Aorta (tissue), 5 donors: ENCODE measurements at regions of chr17 and their contacts with region 1.

Region 1: DNA sequence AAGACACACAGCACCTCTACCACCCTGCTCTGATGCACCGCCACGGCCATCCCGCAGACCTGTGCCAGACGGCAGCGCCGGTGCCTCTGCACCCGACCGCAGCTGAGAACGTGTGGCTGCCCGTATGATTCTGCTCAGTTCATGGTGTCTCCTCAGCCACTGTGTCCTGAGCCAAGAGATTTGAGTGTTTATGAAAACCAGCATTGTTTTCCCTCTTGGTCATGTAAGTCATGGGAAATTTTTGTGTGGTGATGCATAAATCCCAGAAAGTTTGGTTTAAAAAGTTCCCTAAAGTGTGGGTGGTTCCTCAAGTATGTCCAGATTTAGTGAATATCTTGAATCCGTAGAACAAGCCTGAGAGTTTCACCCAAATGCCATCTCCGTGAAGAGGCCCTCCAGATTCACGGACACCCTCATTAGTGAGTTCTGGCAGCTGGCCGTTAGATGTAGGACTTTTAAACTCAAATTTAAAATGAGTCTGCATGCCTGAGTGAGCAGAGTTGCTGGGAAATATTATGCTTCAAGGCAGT is 57.6 kb downstream of the CDRT4 start:
- DNase-seq: peak in 1 of 2 donors; percentile 72
- ATAC-seq: peak; percentile 82
- H3K4me3 ChIP-seq: peak overlapping the region in 1 of 2 donors; percentile 12
- H3K27ac ChIP-seq: peak overlapping the region; percentile 16 to 71
- H3K4me1 ChIP-seq: peaks cover 0 to 3% of the 10 kb centered on the region in 2 donors
- H3K27me3 ChIP-seq: no peaks in the 10 kb centered on the region

Region 2: DNA sequence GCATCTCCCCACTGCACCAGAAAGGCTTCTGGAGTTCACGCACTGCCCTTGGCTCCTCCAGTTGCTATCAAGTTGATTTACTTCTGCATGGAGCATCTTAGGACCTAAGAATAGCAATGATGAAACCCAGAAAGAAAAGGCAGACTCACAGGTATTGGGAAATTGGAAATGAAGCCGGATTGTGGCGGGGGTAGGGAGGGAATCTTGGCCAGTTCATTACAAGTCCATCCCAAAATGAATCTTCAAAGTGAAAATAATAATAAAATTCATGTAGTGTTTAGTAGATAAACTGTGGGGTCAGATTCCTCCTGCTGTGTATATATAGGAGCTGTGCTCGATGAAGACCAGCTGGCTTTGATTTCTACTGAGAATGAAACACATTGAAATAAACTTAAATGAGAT is 102.1 kb before region 1 on chr17:
- intact Hi-C with region 1: no loop called
- DNase-seq: no peak
- ATAC-seq: no peak
- H3K4me3 ChIP-seq: no peak overlapping the region
- H3K27ac ChIP-seq: no peak overlapping the region
- H3K4me1 ChIP-seq: no peaks in the 10 kb centered on the region
- H3K27me3 ChIP-seq: no peaks in the 10 kb centered on the region

Region 3: DNA sequence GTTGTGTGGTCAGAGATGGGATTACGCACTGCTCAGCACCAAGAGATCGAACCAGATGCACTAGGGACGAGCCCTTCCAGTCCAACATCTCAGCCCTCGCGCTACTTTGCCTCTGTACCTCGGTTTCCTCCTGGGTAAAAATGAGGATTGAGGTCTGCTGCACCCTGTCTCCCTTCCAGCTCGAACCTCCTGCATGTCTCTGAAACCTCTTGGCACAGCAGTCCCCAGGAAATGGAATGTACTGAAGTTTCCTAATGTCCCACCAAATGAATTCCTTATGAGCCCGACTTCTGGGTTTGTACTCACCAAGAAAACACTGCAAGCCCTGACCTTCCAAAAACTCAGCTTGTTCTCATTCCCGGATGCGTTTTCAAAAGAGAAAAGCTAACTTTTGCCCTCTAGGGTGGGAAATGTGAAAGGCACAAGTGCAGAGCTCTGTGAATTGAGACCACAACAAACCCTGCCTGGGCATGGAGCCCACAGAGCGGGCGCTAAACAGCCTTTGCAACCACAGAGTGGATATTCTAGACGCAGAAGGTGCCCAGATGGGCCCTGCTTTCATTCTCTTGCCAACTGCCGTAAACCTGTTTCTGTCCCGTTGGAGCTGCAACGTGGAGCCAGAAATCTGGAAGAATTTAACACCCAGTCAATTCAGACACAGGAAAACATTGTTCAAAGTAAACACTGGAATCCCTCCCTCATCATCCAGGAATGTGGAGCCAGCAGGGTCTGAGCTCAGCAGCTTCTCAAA is 47.4 kb after region 1 on chr17:
- intact Hi-C with region 1: loop called in 1 of 2 experiments (anchors 5 kb)
- DNase-seq: peak; percentile 71 to 79
- ATAC-seq: peak; percentile 78
- H3K4me3 ChIP-seq: no peak overlapping the region
- H3K27ac ChIP-seq: peak overlapping the region; percentile 31 to 83
- H3K4me1 ChIP-seq: peaks cover 0 to 5% of the 10 kb centered on the region in 2 donors
- H3K27me3 ChIP-seq: no peaks in the 10 kb centered on the region